Heart left ventricle (tissue), 16 donors: ENCODE measurements at regions of chr18 and their contacts with region 1.

Region 1: DNA sequence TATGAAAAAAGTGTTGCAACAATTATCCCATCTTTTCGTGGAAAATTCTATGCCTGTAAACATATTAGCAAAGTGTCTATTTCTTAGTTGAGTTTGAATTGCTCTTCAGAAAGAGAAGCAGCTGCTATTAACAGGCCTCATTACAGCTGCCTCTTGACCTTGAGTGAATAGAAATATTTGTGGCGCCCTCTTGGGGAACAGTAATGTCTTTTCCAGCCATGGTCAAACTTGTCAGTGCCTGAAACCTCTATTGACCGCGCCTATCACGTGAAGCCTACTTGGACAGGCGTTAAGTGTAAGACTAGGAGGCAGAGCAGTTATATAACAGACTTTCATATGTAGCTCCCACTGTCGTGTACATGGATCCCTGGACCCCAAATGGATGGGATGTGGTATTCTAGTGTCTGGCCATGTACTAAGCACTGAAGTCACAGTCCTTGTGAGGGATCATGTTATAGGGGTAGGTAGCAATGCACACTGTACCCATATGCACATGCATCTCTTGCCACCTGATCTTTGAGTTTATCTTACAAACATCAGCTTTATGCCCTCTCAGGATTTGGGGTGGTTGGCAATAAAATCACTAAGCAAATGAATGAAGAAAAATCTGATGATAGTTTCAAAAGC is 245.0 kb downstream of the PTGR3 start:
- DNase-seq: peak in 4 of 5 donors; percentile 40 to 55 (median 46)
- ATAC-seq: peak; percentile 69 to 91 (median 90)
- H3K4me3 ChIP-seq: no peak overlapping the region
- H3K27ac ChIP-seq: no peak overlapping the region
- H3K4me1 ChIP-seq: peaks cover 0 to 9% (median 0%) of the 10 kb centered on the region in 12 donors
- H3K27me3 ChIP-seq: no peaks in the 10 kb centered on the region
- CTCF ChIP-seq: peak in 11 of 12 donors; percentile 16 to 60 (median 44)
- POLR2A ChIP-seq: no peak

Region 2: DNA sequence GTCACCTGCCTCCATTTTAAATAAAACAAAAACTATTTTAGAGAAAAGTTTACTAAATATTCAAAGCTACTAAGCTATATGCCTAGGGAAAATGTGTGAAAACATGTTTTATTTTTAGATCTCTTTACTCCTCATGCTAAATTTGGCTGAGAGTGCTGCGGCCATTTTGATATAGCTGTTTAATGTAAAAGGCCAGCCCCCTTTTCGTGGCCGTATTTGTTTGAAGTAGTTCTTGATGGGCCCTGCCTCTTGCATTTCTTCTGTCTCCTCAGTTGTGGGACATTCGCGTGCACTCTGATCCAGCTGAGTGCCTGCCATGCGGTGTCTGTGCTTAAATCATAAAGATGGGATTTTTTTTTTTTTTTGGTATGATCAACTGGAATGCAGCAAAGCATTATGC is 302.2 kb before region 1 on chr18:
- intact Hi-C with region 1: loop called in 7 of 10 experiments (anchors 2 to 10 kb)
- DNase-seq: no peak
- ATAC-seq: no peak
- H3K4me3 ChIP-seq: peak overlapping the region in 1 of 12 donors; percentile 7
- H3K27ac ChIP-seq: no peak overlapping the region
- H3K4me1 ChIP-seq: no peaks in the 10 kb centered on the region
- H3K27me3 ChIP-seq: no peaks in the 10 kb centered on the region
- CTCF ChIP-seq: no peak
- POLR2A ChIP-seq: no peak

Region 3: DNA sequence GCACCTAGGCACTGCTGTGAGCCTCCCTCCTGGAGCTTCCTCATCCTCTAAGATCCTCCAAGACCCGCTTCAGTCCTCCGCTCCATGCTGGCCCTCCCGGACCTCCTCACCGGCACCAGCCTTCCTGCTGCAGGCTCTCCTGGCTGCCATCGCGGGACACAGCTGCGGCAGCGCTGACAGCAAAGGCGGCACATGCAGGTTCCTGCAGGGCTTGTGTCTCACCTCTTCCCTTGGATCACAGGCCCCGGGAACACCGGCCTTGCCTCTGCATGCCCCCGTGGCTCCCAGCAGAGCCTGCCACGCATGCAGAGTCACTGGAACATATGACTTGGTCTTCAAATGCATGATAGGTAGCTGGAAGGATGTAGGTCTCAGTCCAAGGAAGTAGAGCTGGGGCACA is 177.8 kb after region 1 on chr18:
- intact Hi-C with region 1: loop called in 1 of 10 experiments (anchors 10 kb)
- DNase-seq: peak in 1 of 5 donors; percentile 45
- ATAC-seq: no peak
- H3K4me3 ChIP-seq: no peak overlapping the region
- H3K27ac ChIP-seq: no peak overlapping the region
- H3K4me1 ChIP-seq: no peaks in the 10 kb centered on the region
- H3K27me3 ChIP-seq: no peaks in the 10 kb centered on the region
- CTCF ChIP-seq: no peak
- POLR2A ChIP-seq: no peak